ENCODE measurements at regions of chr17 and their contacts with region 1.

Region 1: GRCh38 chr17:78970834-78971773 is 8.6 kb downstream of the LGALS3BP start:
- DNase-seq: peak; percentile 74
- H3K4me3 ChIP-seq: no peak overlapping the region
- H3K27ac ChIP-seq: no peak overlapping the region
- H3K4me1 ChIP-seq: no peaks in the 10 kb centered on the region
- H3K27me3 ChIP-seq: no peaks in the 10 kb centered on the region
- CTCF ChIP-seq: peak; percentile 76 to 83
- POLR2A ChIP-seq: no peak

Region 2: GRCh38 chr17:78840725-78841611 is 130.1 kb before region 1 on chr17 and contains the start of gene USP36:
- CTCF ChIA-PET with region 1: interaction called, 13 read pairs
- POLR2A ChIA-PET with region 1: no interaction called
- dilution Hi-C with region 1: no loop called
- intact Hi-C with region 1: no loop called
- DNase-seq: peak; percentile 99
- H3K4me3 ChIP-seq: peak within 1 kb of the TSS; percentile 64 to 72 (median 68)
- H3K27ac ChIP-seq: peak within 1 kb of the TSS; percentile 81
- H3K4me1 ChIP-seq: peaks cover 16% of the 10 kb centered on the region
- H3K27me3 ChIP-seq: no peaks in the 10 kb centered on the region
- CTCF ChIP-seq: no peak
- POLR2A ChIP-seq: peak; percentile 56
- total RNA-seq, gene USP36: 46.6 and 49.8 TPM in 2 replicates

Region 3: GRCh38 chr17:78883164-78884122 is 87.7 kb before region 1 on chr17:
- CTCF ChIA-PET with region 1: interaction called, 13 read pairs
- POLR2A ChIA-PET with region 1: no interaction called
- dilution Hi-C with region 1: no loop called
- intact Hi-C with region 1: loop called (anchors 1 kb)
- DNase-seq: peak; percentile 97
- H3K4me3 ChIP-seq: no peak overlapping the region
- H3K27ac ChIP-seq: peak overlapping the region; percentile 85
- H3K4me1 ChIP-seq: peaks cover 42% of the 10 kb centered on the region
- H3K27me3 ChIP-seq: no peaks in the 10 kb centered on the region
- CTCF ChIP-seq: no peak
- POLR2A ChIP-seq: no peak

Region 4: GRCh38 chr17:78915872-78916632 is 55.1 kb before region 1 on chr17:
- CTCF ChIA-PET with region 1: interaction called, 14 read pairs
- POLR2A ChIA-PET with region 1: no interaction called
- dilution Hi-C with region 1: no loop called
- intact Hi-C with region 1: no loop called
- DNase-seq: peak; percentile 46
- H3K4me3 ChIP-seq: peak overlapping the region in 1 of 3 experiments; percentile 15
- H3K27ac ChIP-seq: peak overlapping the region; percentile 54
- H3K4me1 ChIP-seq: peaks cover 12% of the 10 kb centered on the region
- H3K27me3 ChIP-seq: no peaks in the 10 kb centered on the region
- CTCF ChIP-seq: no peak
- POLR2A ChIP-seq: no peak

Region 5: GRCh38 chr17:78939615-78940014 is 31.5 kb before region 1 on chr17:
- CTCF ChIA-PET with region 1: interaction called, 29 read pairs
- POLR2A ChIA-PET with region 1: no interaction called
- dilution Hi-C with region 1: no loop called
- intact Hi-C with region 1: loop called (anchors 1 kb)
- DNase-seq: peak; percentile 55
- H3K4me3 ChIP-seq: no peak overlapping the region
- H3K27ac ChIP-seq: no peak overlapping the region
- H3K4me1 ChIP-seq: peaks cover 19% of the 10 kb centered on the region
- H3K27me3 ChIP-seq: no peaks in the 10 kb centered on the region
- CTCF ChIP-seq: no peak
- POLR2A ChIP-seq: no peak

Region 6: GRCh38 chr17:78986048-78986648 is 15.0 kb after region 1 on chr17:
- CTCF ChIA-PET with region 1: interaction called, 11 read pairs
- POLR2A ChIA-PET with region 1: no interaction called
- dilution Hi-C with region 1: no loop called
- intact Hi-C with region 1: no loop called
- DNase-seq: peak; percentile 60
- H3K4me3 ChIP-seq: peak overlapping the region in 1 of 3 experiments; percentile 49
- H3K27ac ChIP-seq: peak overlapping the region; percentile 96
- H3K4me1 ChIP-seq: peaks cover 28% of the 10 kb centered on the region
- H3K27me3 ChIP-seq: no peaks in the 10 kb centered on the region
- CTCF ChIP-seq: peak; percentile 12 to 20
- POLR2A ChIP-seq: no peak

Region 7: GRCh38 chr17:79042421-79043190 is 71.5 kb after region 1 on chr17:
- CTCF ChIA-PET with region 1: no interaction called
- POLR2A ChIA-PET with region 1: no interaction called
- dilution Hi-C with region 1: no loop called
- intact Hi-C with region 1: no loop called
- DNase-seq: no peak
- H3K4me3 ChIP-seq: no peak overlapping the region
- H3K27ac ChIP-seq: no peak overlapping the region
- H3K4me1 ChIP-seq: no peaks in the 10 kb centered on the region
- H3K27me3 ChIP-seq: no peaks in the 10 kb centered on the region
- CTCF ChIP-seq: peak; percentile 75 to 90
- POLR2A ChIP-seq: no peak